ENCODE measurements at regions of chr1 and their contacts with region 1.

Region 1: DNA sequence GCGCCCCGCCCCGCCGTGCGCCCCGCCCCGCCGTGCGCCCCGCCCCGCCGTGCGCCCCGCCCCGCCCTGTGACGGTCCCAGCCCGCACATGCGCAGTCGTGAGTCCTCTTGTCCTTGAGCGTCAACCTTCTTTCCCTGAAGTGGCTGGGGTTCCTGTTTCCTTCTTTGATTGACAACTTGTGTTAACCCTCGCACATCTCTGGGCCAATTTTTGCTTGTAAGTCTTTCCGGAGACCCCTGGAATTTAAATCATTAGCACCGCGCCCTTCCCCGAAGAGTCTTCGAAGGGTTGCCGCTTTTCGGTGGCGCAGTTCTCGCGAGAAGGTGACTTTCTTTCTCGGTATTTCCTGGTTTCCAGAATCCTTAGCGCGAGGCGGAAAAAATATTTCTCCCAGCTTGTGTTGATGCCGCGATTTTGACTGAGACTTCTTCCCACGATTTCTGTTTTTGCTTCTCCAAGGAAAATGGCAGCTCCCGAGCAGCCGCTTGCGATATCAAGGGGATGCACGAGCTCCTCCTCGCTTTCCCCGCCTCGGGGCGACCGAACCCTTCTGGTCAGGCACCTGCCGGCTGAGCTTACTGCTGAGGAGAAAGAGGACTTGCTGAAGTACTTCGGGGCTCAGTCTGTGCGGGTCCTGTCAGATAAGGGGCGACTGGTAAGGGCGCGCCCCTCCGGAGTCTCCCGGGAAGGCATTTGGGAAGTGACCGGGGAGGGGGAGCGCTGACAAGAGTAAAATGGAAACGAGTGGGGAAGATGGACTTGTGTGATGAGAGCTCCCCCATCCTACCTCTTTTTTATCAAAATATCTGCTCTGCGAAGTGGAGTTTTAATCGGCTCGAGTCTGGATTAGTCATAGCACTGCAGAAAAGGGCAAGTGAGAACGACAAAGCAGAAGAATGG is at the start of gene RNPC3:
- DNase-seq: peak; percentile 93
- ATAC-seq: peak; percentile 90
- total RNA-seq, gene RNPC3: 15.8 TPM

Region 2: DNA sequence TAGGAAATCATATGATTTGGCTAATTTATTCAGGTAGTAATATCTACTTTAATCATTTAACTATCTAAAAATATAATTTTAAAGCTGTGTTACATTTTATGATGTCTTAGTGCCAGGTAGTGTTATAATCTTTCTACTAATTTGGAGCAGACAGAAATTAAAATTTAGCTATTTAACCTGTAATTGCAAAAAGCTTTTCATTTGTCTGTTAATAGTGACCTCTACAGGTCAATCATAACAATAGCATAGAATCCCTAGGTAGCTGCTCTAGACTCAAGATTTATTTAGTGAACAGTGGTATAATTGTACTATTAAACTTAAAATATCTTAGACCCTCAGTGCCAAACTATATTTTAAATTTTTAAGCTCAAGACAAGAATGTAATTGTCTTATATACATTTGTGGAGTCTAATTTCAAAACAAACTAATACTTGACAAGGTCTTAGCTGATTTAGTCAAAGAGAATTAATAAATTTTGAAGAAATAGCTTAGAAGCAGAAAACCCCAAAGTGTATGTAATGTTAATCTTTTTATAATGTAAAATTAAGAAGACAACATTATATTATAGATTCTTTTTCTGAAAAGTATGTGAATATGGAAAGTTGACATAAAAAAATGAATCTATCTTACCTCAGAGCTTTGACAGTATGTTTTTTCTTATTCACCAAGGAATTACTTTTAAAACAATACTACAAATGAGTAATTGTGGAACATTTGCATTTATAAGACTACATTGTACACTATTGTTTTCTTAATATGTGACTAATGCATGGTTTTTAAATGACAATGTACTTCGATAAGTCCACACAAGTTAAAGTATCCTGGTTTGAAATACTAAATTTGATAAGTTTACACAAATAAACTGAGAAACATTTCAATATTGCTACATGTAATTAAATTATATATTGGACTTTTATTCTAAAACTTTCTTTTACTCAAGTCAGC is 64.4 kb before region 1 on chr1:
- intact Hi-C with region 1: no loop called
- DNase-seq: no peak
- ATAC-seq: no peak

Region 3: GRCh38 chr1:103561643-103562395 is 36.0 kb after region 1 on chr1:
- intact Hi-C with region 1: loop called (anchors 5 kb)
- DNase-seq: no peak
- ATAC-seq: peak; percentile 70

Measured in Right ventricle myocardium inferior (tissue), 1 donor.